Activated CD4-positive, alpha-beta T cell treated with anti-CD3 and anti-CD28 coated beads, Interleukin-2, amount 10 ng/mL, durations not matched to agents 7 days and 5 days (primary cell): ENCODE measurements at regions of chr3 and their contacts with region 1.

Region 1: GRCh38 chr3:111989061-111989678 is 9.6 kb upstream of the TAGLN3 start:
- DNase-seq: peak; percentile 28
- H3K4me3 Mint-ChIP-seq: no peak overlapping the region
- H3K27ac Mint-ChIP-seq: no peak overlapping the region
- H3K4me1 Mint-ChIP-seq: peaks cover 30% of the 10 kb centered on the region
- H3K27me3 Mint-ChIP-seq: no peaks in the 10 kb centered on the region

Region 2: GRCh38 chr3:111978493-111979433 is 10.4 kb before region 1 on chr3 and contains the start of gene ABHD10:
- CTCF ChIA-PET with region 1: interaction called, 8 read pairs
- POLR2A ChIA-PET with region 1: interaction called, 10 read pairs
- DNase-seq: peak; percentile 98
- H3K4me3 Mint-ChIP-seq: peak within 1 kb of the TSS; percentile 90
- H3K27ac Mint-ChIP-seq: peak within 1 kb of the TSS; percentile 96
- H3K4me1 Mint-ChIP-seq: peaks cover 35% of the 10 kb centered on the region
- H3K27me3 Mint-ChIP-seq: peaks cover 4% of the 10 kb centered on the region
- total RNA-seq, gene ABHD10: 36.9 to 40.0 TPM

Region 3: DNA sequence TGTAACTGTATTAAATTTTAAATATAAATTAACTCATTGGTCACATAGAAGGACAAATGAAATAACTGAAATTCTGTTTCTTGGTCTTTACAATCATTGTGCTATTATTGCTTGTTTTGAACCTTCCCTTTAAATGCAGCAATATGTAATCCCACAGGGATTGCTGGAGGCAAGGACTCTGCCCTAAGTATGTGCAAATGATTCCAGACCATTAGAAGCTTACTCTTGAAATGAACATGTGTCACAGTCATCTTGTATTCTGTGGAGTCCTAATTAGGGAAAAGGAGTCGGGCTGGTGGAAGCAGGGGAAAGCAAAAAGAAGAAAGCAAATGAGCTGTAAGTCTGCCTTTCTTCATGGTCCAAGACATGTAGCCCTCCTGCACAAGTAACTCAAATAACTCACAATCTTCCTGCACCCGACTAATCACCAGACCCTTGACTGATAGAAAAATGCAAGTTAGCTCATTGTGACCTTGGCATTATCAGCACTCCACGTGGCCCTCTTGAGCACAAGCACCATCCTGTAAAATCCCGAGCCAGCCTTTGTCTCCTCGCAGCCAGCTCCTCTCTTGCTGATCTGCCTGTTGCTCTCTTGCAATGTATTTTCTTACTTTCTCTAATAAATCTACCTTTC is 43.0 kb after region 1 on chr3:
- CTCF ChIA-PET with region 1: no interaction called
- POLR2A ChIA-PET with region 1: no interaction called
- DNase-seq: no peak
- H3K4me3 Mint-ChIP-seq: no peak overlapping the region
- H3K27ac Mint-ChIP-seq: no peak overlapping the region
- H3K4me1 Mint-ChIP-seq: no peaks in the 10 kb centered on the region
- H3K27me3 Mint-ChIP-seq: peaks cover 2% of the 10 kb centered on the region